Heart right ventricle (tissue), 16 donors: ENCODE measurements at regions of chr1 and their contacts with region 1.

Region 1: GRCh38 chr1:26921540-26922430 is at the start of gene NUDC:
- DNase-seq: peak; percentile 96 to 97
- ATAC-seq: peak; percentile 96 to 99 (median 99)
- H3K4me3 ChIP-seq: peak within 1 kb of the TSS; percentile 84 to 98 (median 92)
- H3K27ac ChIP-seq: peak within 1 kb of the TSS in 9 of 10 donors; percentile 71 to 95 (median 88)
- H3K4me1 ChIP-seq: peaks cover 7 to 28% (median 22%) of the 10 kb centered on the region in 9 donors
- H3K27me3 ChIP-seq: no peaks in the 10 kb centered on the region
- CTCF ChIP-seq: peak in 1 of 9 donors; percentile 18
- total RNA-seq, gene NUDC: 48.9 to 84.0 (median 61.4) TPM

Region 2: GRCh38 chr1:26826261-26827105 is 95.3 kb before region 1 on chr1 and contains the start of gene ZDHHC18:
- intact Hi-C with region 1: no loop called
- DNase-seq: peak; percentile 54 to 81
- ATAC-seq: peak; percentile 66 to 95 (median 78)
- H3K4me3 ChIP-seq: peak within 1 kb of the TSS; percentile 66 to 93 (median 73)
- H3K27ac ChIP-seq: peak within 1 kb of the TSS; percentile 13 to 90 (median 81)
- H3K4me1 ChIP-seq: peaks cover 12 to 49% (median 36%) of the 10 kb centered on the region in 9 donors
- H3K27me3 ChIP-seq: no peaks in the 10 kb centered on the region
- CTCF ChIP-seq: peak; percentile 31 to 71 (median 43)
- total RNA-seq, gene ZDHHC18: 7.4 to 19.1 (median 11.8) TPM

Region 3: GRCh38 chr1:26889551-26890466 is 32.0 kb before region 1 on chr1 and contains the start of gene GPN2:
- intact Hi-C with region 1: loop called in 1 of 10 experiments (anchors 2 kb)
- DNase-seq: peak; percentile 80 to 82
- ATAC-seq: peak; percentile 91 to 96 (median 95)
- H3K4me3 ChIP-seq: peak within 1 kb of the TSS; percentile 59 to 99 (median 93)
- H3K27ac ChIP-seq: peak within 1 kb of the TSS; percentile 82 to 98 (median 92)
- H3K4me1 ChIP-seq: peaks cover 4 to 39% (median 30%) of the 10 kb centered on the region in 9 donors
- H3K27me3 ChIP-seq: no peaks in the 10 kb centered on the region
- CTCF ChIP-seq: no peak
- total RNA-seq, gene GPN2: 12.4 to 31.3 (median 20.4) TPM

Region 4: DNA sequence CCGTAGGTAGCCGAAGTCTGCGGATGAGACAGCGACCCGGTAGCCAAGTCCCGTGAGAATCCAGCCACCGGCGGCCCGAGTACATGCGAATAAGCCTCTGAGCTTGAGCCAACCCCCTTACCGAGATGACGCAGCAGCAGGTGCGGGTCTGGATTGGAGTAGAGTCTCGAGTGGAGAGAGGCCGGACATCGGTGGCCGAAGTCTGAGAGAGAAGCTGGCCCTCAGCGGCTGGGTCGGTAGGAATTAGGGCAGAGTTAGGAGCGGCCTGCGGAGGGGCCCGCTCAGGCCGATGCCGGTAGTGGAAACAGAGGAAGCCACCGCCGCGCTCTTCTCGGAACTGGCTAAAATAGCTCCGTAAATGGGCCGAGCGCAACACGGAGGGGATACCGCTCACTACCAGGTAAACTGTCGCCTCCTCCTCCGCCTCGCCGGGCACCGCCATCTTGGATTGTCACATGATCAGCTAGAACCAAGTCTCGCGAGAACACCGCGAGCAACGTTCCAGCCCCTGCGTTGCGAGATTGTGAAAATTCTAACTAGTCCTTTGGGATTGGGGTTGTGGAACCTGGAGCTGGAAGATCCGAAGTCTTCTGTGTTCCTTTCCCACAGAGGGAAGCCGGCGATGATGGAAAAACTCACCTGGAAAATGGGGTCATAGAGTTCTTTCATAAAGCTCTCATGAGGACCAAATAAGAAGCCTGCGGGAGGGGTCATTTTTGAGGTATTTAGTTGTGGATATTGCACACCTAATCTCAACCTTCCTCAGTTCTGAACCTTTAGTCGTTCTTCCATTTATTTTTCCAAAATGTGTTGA is 21.6 kb before region 1 on chr1 and contains the start of gene GPATCH3:
- intact Hi-C with region 1: no loop called
- DNase-seq: peak; percentile 92 to 93
- ATAC-seq: peak; percentile 86 to 96 (median 94)
- H3K4me3 ChIP-seq: peak within 1 kb of the TSS; percentile 58 to 98 (median 92)
- H3K27ac ChIP-seq: peak within 1 kb of the TSS; percentile 38 to 91 (median 79)
- H3K4me1 ChIP-seq: peaks cover 10 to 28% (median 15%) of the 10 kb centered on the region in 9 donors
- H3K27me3 ChIP-seq: no peaks in the 10 kb centered on the region
- CTCF ChIP-seq: no peak
- total RNA-seq, gene GPATCH3: 6.5 to 10.0 (median 8.6) TPM

Region 5: DNA sequence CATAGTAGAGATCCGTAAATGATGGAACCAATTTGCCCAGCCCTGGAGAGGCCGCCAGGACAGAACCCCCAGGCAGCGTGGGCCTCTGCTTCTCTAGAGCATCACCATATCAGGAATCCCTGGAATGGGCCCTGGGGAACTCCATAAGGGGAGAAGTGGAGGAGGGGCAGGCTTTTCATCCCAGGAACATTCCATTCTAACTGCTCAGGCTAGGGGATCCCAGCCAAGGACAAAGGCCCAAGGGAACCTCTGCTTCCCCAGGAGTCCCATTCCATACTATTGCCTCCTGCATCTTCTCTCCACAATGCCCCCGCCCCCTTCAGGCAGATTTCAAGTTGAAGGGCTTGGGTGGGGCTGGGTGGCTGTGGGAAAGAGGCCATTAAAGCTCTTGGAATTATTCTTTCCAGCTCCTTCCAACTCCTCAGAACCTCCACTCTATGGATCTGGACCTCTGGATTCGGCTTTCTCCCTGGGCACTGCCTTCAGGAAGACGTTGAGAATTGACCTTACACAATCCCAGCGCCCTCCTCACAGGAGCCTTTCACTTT is 77.7 kb after region 1 on chr1:
- intact Hi-C with region 1: loop called in 1 of 10 experiments (anchors 5 kb)
- DNase-seq: peak; percentile 66 to 78
- ATAC-seq: peak; percentile 48 to 87 (median 78)
- H3K4me3 ChIP-seq: no peak overlapping the region
- H3K27ac ChIP-seq: peak overlapping the region; percentile 58 to 87 (median 76)
- H3K4me1 ChIP-seq: peaks cover 37 to 75% (median 62%) of the 10 kb centered on the region in 9 donors
- H3K27me3 ChIP-seq: peaks cover 0 to 29% (median 20%) of the 10 kb centered on the region in 7 donors
- CTCF ChIP-seq: no peak